ENCODE measurements at regions of chr10 and their contacts with region 1.

Region 1: GRCh38 chr10:80382989-80383388 is 25.4 kb upstream of the PRXL2A start:
- DNase-seq: peak; percentile 11 to 77 (median 48)
- ATAC-seq: peak; percentile 77
- H3K4me3 ChIP-seq: no peak overlapping the region
- H3K4me3 Mint-ChIP-seq: no peak overlapping the region
- H3K27ac ChIP-seq: no peak overlapping the region
- H3K27ac Mint-ChIP-seq: peak overlapping the region; percentile 73
- H3K4me1 ChIP-seq: peaks cover 4% of the 10 kb centered on the region
- H3K4me1 Mint-ChIP-seq: peaks cover 15% of the 10 kb centered on the region
- H3K27me3 ChIP-seq: no peaks in the 10 kb centered on the region
- H3K27me3 Mint-ChIP-seq: no peaks in the 10 kb centered on the region
- CTCF ChIP-seq: peak; percentile 83

Region 2: DNA sequence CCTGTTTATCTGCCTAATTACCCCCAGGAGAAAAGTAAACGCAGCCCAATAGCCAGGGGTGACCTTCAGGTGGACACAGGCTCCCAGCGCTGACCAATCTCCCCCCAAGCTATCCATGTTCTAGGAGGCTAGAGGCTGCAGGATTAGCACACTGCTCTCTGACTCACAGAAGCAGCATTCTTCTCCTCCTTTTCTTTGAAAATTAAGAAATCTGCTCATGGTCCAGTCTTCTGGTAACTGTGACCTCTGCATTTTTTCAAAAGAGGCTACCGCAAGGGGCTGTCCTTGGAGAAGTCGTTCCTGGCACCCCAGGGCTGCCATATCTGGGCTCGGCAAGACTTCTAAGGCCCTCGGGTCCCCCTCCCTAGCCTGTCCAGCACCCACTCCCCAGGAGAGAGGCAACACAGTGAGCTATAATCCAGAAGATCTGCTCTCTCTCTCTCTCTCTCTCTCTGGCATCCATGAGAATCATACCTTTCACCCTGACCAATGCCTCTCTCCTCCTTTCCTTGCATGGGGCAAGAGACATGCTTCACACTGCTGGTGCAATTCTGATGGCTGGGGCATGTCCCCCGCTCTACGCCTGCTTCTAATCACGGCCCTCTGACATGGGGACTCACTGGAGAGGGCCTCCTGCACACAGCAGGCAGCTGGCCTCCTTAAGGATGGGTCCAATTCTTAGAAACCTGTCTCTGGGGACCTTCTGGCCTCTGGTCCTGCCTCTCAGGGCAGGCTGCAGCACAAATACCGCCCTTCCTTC is 205.0 kb before region 1 on chr10:
- CTCF ChIA-PET with region 1: no interaction called
- POLR2A ChIA-PET with region 1: no interaction called
- intact Hi-C with region 1: no loop called
- DNase-seq: no peak
- ATAC-seq: no peak
- H3K4me3 ChIP-seq: no peak overlapping the region
- H3K4me3 Mint-ChIP-seq: no peak overlapping the region
- H3K27ac ChIP-seq: no peak overlapping the region
- H3K27ac Mint-ChIP-seq: peak overlapping the region; percentile 38
- H3K4me1 ChIP-seq: peaks cover 48% of the 10 kb centered on the region
- H3K4me1 Mint-ChIP-seq: peaks cover 66% of the 10 kb centered on the region
- H3K27me3 ChIP-seq: no peaks in the 10 kb centered on the region
- H3K27me3 Mint-ChIP-seq: no peaks in the 10 kb centered on the region
- CTCF ChIP-seq: no peak

Region 3: GRCh38 chr10:80408242-80409101 is 25.5 kb after region 1 on chr10 and contains the start of gene PRXL2A:
- CTCF ChIA-PET with region 1: interaction called, 15 read pairs
- POLR2A ChIA-PET with region 1: interaction called, 3 read pairs
- intact Hi-C with region 1: no loop called
- DNase-seq: peak; percentile 52 to 87 (median 82)
- ATAC-seq: peak; percentile 96
- H3K4me3 ChIP-seq: peak within 1 kb of the TSS; percentile 65 to 70
- H3K4me3 Mint-ChIP-seq: peak within 1 kb of the TSS; percentile 91
- H3K27ac ChIP-seq: peak within 1 kb of the TSS in 1 of 2 experiments; percentile 39
- H3K27ac Mint-ChIP-seq: peak within 1 kb of the TSS; percentile 77
- H3K4me1 ChIP-seq: peaks cover 4% of the 10 kb centered on the region
- H3K4me1 Mint-ChIP-seq: peaks cover 32% of the 10 kb centered on the region
- H3K27me3 ChIP-seq: peaks cover 0 to 3% of the 10 kb centered on the region in 2 experiments
- H3K27me3 Mint-ChIP-seq: no peaks in the 10 kb centered on the region
- CTCF ChIP-seq: no peak
- total RNA-seq, gene PRXL2A: 4.6 to 5.1 TPM

Region 4: DNA sequence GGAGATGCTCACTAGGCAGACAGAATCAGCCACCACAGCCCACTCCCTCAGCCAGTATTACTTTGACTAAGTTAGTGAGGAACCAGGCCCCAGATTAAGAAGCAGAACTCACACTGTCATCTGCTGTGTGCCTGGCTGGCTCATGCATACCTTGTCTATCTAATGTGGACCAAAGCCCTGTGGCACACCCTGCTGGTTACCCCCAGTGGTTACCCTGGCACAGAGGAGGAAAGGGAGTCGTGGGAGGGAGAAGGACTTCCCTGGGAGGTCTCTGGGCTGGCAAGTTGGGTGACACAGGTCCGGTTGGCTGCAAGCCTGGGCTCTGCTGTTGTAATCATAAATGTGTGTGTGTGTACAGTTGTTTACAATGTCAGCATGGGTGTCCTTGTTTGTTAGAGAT is 147.3 kb after region 1 on chr10:
- CTCF ChIA-PET with region 1: interaction called, 7 read pairs
- POLR2A ChIA-PET with region 1: interaction called, 3 read pairs
- intact Hi-C with region 1: loop called (anchors 1 to 5 kb)
- DNase-seq: peak in 6 of 9 experiments; percentile 9 to 65 (median 42)
- ATAC-seq: peak; percentile 62
- H3K4me3 ChIP-seq: no peak overlapping the region
- H3K4me3 Mint-ChIP-seq: peak overlapping the region; percentile 72
- H3K27ac ChIP-seq: peak overlapping the region in 1 of 2 experiments; percentile 14
- H3K27ac Mint-ChIP-seq: peak overlapping the region; percentile 88
- H3K4me1 ChIP-seq: peaks cover 74% of the 10 kb centered on the region
- H3K4me1 Mint-ChIP-seq: peaks cover 71% of the 10 kb centered on the region
- H3K27me3 ChIP-seq: no peaks in the 10 kb centered on the region
- H3K27me3 Mint-ChIP-seq: no peaks in the 10 kb centered on the region
- CTCF ChIP-seq: peak; percentile 27

Region 5: GRCh38 chr10:80580638-80581468 is 197.9 kb after region 1 on chr10:
- CTCF ChIA-PET with region 1: interaction called, 14 read pairs
- POLR2A ChIA-PET with region 1: no interaction called
- intact Hi-C with region 1: loop called (anchors 1 to 5 kb)
- DNase-seq: no peak
- ATAC-seq: no peak
- H3K4me3 ChIP-seq: no peak overlapping the region
- H3K4me3 Mint-ChIP-seq: no peak overlapping the region
- H3K27ac ChIP-seq: no peak overlapping the region
- H3K27ac Mint-ChIP-seq: no peak overlapping the region
- H3K4me1 ChIP-seq: no peaks in the 10 kb centered on the region
- H3K4me1 Mint-ChIP-seq: no peaks in the 10 kb centered on the region
- H3K27me3 ChIP-seq: no peaks in the 10 kb centered on the region
- H3K27me3 Mint-ChIP-seq: peaks cover 9% of the 10 kb centered on the region
- CTCF ChIP-seq: no peak

Region 6: DNA sequence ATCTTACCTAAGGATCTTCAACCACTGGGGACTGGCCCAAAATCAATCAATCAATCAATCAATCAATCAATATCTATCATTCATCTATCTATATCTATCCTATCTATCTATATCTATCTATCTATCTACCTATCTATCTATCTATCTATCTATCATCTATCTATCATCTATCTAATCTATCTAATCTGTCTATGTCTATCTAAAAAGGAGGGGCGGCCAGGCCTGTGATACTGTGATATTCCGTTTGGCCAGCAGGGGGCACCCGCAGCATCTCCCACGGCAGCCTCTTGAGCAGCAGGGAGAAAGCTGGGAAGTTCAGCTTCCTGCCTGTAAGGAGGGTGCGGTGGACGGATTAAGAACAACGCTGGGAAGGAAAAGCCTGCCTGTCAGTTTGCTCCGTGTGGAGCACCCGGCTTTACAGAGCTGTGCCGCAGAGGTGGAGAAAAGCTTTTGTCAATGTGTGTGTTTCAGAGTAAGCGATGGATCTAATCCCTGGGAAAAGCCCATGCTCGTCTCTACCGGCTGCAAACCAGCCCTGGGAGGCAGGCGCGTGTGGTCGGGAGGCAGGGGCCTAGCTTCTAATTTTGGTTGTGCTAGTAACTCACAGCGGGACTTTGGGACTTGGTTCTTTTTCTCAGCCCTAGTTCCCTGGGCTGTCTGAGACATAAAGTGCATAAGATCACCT is 279.7 kb after region 1 on chr10:
- CTCF ChIA-PET with region 1: interaction called, 7 read pairs
- POLR2A ChIA-PET with region 1: no interaction called
- intact Hi-C with region 1: loop called in 1 of 2 experiments (anchors 10 kb)
- DNase-seq: peak; percentile 45 to 81 (median 67)
- ATAC-seq: peak; percentile 78
- H3K4me3 ChIP-seq: no peak overlapping the region
- H3K4me3 Mint-ChIP-seq: peak overlapping the region; percentile 53
- H3K27ac ChIP-seq: no peak overlapping the region
- H3K27ac Mint-ChIP-seq: no peak overlapping the region
- H3K4me1 ChIP-seq: peaks cover 5% of the 10 kb centered on the region
- H3K4me1 Mint-ChIP-seq: peaks cover 5% of the 10 kb centered on the region
- H3K27me3 ChIP-seq: peaks cover 4 to 11% of the 10 kb centered on the region in 2 experiments
- H3K27me3 Mint-ChIP-seq: peaks cover 37% of the 10 kb centered on the region
- CTCF ChIP-seq: peak; percentile 96

Region 7: GRCh38 chr10:80699602-80700039 is 316.6 kb after region 1 on chr10:
- CTCF ChIA-PET with region 1: interaction called, 5 read pairs
- POLR2A ChIA-PET with region 1: no interaction called
- intact Hi-C with region 1: loop called (anchors 2 to 10 kb)
- DNase-seq: peak; percentile 31 to 80 (median 59)
- ATAC-seq: no peak
- H3K4me3 ChIP-seq: no peak overlapping the region
- H3K4me3 Mint-ChIP-seq: no peak overlapping the region
- H3K27ac ChIP-seq: no peak overlapping the region
- H3K27ac Mint-ChIP-seq: no peak overlapping the region
- H3K4me1 ChIP-seq: peaks cover 4% of the 10 kb centered on the region
- H3K4me1 Mint-ChIP-seq: no peaks in the 10 kb centered on the region
- H3K27me3 ChIP-seq: no peaks in the 10 kb centered on the region
- H3K27me3 Mint-ChIP-seq: no peaks in the 10 kb centered on the region
- CTCF ChIP-seq: peak; percentile 77

Region 8: GRCh38 chr10:80924063-80924952 is 541.3 kb after region 1 on chr10:
- CTCF ChIA-PET with region 1: interaction called, 5 read pairs
- POLR2A ChIA-PET with region 1: no interaction called
- intact Hi-C with region 1: loop called in 1 of 2 experiments (anchors 2 kb)
- DNase-seq: peak in 2 of 9 experiments; percentile 10 to 29
- ATAC-seq: no peak
- H3K4me3 ChIP-seq: no peak overlapping the region
- H3K4me3 Mint-ChIP-seq: no peak overlapping the region
- H3K27ac ChIP-seq: no peak overlapping the region
- H3K27ac Mint-ChIP-seq: no peak overlapping the region
- H3K4me1 ChIP-seq: no peaks in the 10 kb centered on the region
- H3K4me1 Mint-ChIP-seq: no peaks in the 10 kb centered on the region
- H3K27me3 ChIP-seq: no peaks in the 10 kb centered on the region
- H3K27me3 Mint-ChIP-seq: peaks cover 10% of the 10 kb centered on the region
- CTCF ChIP-seq: no peak